ENCODE measurements at regions of chr10 and their contacts with region 1.

Region 1: GRCh38 chr10:62681211-62681940 is 123.1 kb upstream of the ADO start:
- DNase-seq: peak; percentile 88
- CTCF ChIP-seq: peak; percentile 76

Region 2: DNA sequence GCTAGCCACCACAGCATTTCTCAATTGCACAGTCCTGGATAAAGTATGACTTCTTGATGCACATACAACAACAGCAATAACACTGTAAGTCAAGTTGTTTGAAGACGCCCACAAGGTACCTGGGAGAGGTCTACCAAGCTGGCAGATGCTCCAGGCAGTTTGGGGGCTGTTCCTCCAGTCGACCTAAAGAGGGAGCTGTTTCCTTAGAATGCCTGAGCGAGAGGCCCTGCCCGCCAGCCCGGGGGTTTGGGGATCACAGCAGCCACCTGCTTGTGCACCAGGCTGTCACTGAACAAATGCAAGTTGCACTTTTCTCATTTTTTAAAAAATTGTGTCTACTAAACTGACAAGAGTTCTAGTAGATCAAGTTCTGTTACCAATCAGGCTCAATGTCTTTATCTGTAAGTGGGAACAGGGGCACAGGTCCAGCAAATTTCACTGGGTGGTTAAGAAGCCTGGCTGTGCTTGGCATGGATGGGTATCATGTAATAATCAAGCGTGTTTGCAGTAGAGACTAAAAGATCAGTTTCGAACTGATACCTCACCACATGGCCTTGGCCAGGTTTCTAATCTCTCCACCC is 70.6 kb before region 1 on chr10:
- CTCF ChIA-PET with region 1: interaction called, 24 read pairs
- POLR2A ChIA-PET with region 1: no interaction called
- DNase-seq: peak; percentile 88
- CTCF ChIP-seq: peak; percentile 86

Region 3: GRCh38 chr10:62637249-62638061 is 43.9 kb before region 1 on chr10:
- CTCF ChIA-PET with region 1: interaction called, 17 read pairs
- POLR2A ChIA-PET with region 1: no interaction called
- DNase-seq: peak; percentile 26
- CTCF ChIP-seq: no peak

Region 4: DNA sequence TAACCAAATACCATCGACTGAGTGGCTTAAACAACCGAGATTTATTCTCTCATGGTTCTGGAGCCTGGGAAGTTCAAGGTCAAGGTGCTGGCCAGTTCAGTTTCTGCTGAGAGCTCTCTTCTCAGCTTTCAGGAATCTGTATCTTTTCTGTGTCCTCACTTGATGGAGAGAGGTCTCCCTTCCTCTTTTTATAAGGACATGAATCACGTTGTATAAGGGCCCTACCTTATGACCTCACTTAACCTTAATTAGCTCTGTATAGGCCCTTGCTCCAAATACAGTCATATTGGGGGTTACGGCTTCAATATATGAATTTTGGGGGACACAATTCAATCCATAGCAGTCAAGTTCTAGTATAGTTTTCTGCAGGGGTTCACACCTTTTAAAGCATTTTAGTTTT is 12.0 kb before region 1 on chr10:
- CTCF ChIA-PET with region 1: interaction called, 58 read pairs
- POLR2A ChIA-PET with region 1: no interaction called
- DNase-seq: no peak
- CTCF ChIP-seq: no peak

Region 5: DNA sequence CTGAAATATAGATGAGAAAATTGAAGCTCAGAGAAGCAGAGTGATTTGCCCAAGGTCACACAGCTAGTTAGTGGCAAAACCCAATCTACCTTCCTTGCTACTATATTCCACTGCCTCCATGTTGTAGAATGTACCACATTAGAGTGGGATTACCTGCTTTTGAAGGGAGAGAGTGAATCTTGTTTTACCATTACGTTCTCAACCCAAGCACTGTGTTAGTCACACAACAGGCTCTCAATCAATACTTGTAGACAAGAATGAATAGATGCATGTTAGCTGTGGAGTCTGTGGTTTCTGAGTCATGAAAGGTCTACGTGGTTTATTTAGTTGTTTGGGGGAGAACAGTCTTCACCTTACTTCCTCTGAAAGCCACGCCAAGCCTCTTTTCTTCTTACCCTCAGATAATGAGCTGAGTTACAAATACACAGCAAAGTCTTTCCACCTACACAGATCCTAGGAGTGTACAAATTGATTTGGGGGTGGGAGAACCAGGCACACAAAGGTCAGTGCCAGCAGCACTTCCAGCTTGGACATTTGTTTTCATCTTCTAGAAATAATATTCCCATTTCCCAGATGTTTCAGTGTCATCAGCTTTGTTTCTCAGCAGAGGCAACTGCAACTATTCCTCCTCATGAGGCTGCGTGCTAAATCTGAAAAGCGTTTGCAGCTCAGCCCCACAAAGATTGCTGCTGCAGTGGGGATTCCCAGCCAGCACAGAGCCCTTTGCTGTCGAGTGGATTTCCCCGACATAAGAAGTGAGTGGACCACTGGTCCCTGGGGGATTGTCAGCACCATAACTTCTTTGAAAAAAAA is 51.7 kb after region 1 on chr10:
- CTCF ChIA-PET with region 1: interaction called, 10 read pairs
- POLR2A ChIA-PET with region 1: no interaction called
- DNase-seq: peak; percentile 64
- CTCF ChIP-seq: no peak

Measured in GM10248 (cell line).